ENCODE measurements at regions of chr9 and their contacts with region 1.

Region 1: GRCh38 chr9:98204692-98205091 is 12.3 kb upstream of the CORO2A start:
- DNase-seq: no peak
- H3K27ac ChIP-seq: no peak overlapping the region; the same call in 1 of the 2 replicates
- CTCF ChIP-seq: no peak

Region 2: GRCh38 chr9:97803167-97804058 is 401.3 kb before region 1 on chr9:
- CTCF ChIA-PET with region 1: no interaction called
- POLR2A ChIA-PET with region 1: no interaction called
- DNase-seq: peak; percentile 96
- H3K27ac ChIP-seq: peak overlapping the region; percentile 73
- CTCF ChIP-seq: peak; percentile 39

Region 3: GRCh38 chr9:98263482-98264357 is 59.0 kb after region 1 on chr9:
- CTCF ChIA-PET with region 1: interaction called, 13 read pairs
- POLR2A ChIA-PET with region 1: no interaction called
- DNase-seq: peak; percentile 90
- H3K27ac ChIP-seq: no peak overlapping the region
- CTCF ChIP-seq: peak; percentile 100

Measured in RWPE1 (cell line).